Colonic mucosa (tissue), 4 donors: ENCODE measurements at regions of chr11 and their contacts with region 1.

Region 1: GRCh38 chr11:43895601-43896000 is 15.0 kb downstream of the ALKBH3 start:
- DNase-seq: no peak
- H3K4me3 ChIP-seq: no peak overlapping the region
- H3K27ac ChIP-seq: no peak overlapping the region
- H3K4me1 ChIP-seq: no peaks in the 10 kb centered on the region
- H3K27me3 ChIP-seq: no peaks in the 10 kb centered on the region
- CTCF ChIP-seq: no peak

Region 2: DNA sequence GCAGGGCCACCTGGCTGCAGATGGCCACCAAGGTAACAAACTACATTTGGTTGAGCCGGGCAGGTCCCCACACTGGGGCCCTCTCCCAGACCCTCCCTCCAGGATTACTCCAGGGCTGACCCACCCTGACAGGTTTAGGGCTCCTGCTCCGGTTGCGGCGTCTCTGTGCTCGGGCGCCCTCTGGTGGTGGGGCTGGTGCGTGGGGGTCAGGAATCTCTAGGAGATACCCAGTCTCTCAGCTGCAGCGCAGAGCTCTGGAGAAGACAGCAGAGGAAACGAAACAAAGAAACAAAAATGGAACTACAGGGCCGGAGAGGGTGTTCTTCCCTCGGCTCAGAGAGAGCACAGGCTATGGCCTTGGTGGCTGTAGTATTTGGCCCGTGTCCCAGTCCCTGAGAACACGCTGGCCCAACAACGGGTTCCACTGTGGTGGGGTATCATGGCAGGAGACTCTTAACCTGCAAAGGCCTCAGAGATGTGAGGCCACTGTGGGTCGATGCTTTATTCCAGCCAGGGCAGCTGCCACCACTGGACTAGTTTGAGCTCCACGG is 49.2 kb after region 1 on chr11:
- intact Hi-C with region 1: loop called (anchors 5 kb)
- DNase-seq: peak; percentile 85
- H3K4me3 ChIP-seq: peak overlapping the region; percentile 47
- H3K27ac ChIP-seq: peak overlapping the region; percentile 52
- H3K4me1 ChIP-seq: no peaks in the 10 kb centered on the region
- H3K27me3 ChIP-seq: peaks cover 40% of the 10 kb centered on the region
- CTCF ChIP-seq: peak; percentile 63

Region 3: DNA sequence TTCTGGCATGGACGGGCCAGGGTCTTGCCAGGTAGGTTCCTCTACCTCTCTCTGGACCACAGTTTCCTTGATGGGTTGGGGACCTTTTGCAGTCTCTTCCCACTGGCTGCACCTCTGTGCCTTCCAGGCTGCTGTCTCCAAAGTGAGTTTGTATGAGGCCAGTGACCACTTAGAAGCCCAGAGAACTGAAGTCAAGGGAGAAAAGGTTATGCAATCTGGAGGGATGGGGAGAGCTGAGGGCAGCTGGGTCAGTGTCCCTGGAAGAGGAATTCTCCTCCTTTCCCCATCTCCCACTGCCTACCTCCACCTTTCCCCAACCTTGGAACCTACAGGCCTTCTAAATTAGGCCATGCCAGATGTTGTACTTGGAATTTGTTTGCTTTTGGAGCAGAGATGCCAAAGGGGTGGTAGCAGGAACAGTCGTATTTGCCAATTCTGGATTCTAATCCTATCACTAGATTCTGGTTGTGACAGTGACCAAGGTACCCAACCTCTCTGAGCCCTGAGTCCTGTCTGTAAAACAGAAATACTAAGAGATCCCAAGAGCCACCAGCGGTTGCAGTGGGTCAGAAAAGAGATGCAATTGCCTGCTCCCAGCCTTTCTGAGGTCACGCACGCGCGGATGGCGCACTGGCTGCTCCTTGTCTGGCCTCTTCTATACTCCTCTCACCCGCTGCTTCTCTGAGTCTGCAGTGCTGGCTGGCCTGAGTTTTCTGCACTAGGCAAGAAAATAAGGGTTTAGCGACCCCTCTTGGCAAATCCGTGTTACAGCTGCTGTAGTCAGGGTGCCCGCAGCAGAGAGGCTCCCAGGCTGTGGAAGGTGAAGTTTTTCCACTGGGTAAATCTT is 141.4 kb after region 1 on chr11:
- intact Hi-C with region 1: loop called (anchors 5 kb)
- DNase-seq: peak; percentile 59
- H3K4me3 ChIP-seq: no peak overlapping the region
- H3K27ac ChIP-seq: no peak overlapping the region
- H3K4me1 ChIP-seq: no peaks in the 10 kb centered on the region
- H3K27me3 ChIP-seq: no peaks in the 10 kb centered on the region
- CTCF ChIP-seq: peak; percentile 65